Posterior vena cava (tissue), 2 donors: ENCODE measurements at regions of chr10 and their contacts with region 1.

Region 1: GRCh38 chr10:77290528-77291155 is 347.0 kb downstream of the KCNMA1 start:
- DNase-seq: no peak

Region 2: GRCh38 chr10:76509446-76509845 is 781.2 kb before region 1 on chr10:
- intact Hi-C with region 1: loop called in 1 of 2 experiments (anchors 5 kb)
- DNase-seq: no peak